Activated naive CD8-positive, alpha-beta T cell treated with anti-CD3 and anti-CD28 coated beads, Interleukin-2, amount 10 ng/mL, durations not matched to agents 7 days and 5 days (primary cell): ENCODE measurements at regions of chr15 and their contacts with region 1.

Region 1: GRCh38 chr15:90931737-90932659 is at the start of gene HDDC3:
- DNase-seq: peak; percentile 98
- ATAC-seq: peak; percentile 55
- H3K4me3 Mint-ChIP-seq: peak within 1 kb of the TSS; percentile 99
- H3K27ac Mint-ChIP-seq: peak within 1 kb of the TSS; percentile 99
- H3K4me1 Mint-ChIP-seq: peaks cover 45% of the 10 kb centered on the region
- H3K27me3 Mint-ChIP-seq: no peaks in the 10 kb centered on the region
- total RNA-seq, gene HDDC3: 28.1 to 29.2 TPM

Region 2: DNA sequence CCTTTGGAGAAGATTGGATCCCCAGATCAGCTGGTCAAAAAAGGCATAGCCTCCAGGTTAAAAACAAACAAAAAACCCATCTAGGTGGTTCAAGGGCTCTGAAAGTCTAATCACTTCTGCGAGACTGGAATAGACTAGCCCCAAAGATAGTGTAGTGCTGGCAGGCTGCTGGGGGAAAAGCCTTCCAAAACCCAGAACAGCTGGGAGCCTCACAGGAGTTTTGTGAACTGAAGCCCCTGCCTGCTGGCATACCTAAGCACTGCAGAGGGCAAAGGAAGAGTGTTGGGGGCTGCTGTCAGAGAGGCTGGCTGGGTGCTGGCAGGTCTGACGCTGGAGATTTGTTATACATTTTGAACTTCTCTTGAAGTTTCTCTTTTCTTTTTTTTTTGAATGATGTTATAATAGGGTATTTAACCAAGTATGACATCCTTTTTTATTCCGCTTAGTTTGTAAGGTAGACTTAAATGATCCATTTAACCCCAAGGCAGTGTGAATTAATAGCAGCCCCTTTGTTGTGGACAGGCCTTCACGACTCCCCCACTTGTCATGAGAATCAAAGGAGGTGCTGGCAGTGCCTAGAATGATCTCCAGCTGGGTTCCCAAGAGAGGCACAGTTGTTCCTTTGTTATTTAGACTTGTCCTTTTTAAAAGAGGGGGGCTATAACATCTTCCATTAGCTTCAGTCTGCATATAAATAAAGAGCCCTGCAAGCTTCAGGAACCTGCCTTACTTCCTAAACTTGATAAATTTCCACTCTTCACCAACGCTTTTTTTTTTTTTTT is 348.3 kb before region 1 on chr15:
- POLR2A ChIA-PET with region 1: no interaction called
- DNase-seq: no peak
- ATAC-seq: no peak
- H3K4me3 Mint-ChIP-seq: no peak overlapping the region
- H3K27ac Mint-ChIP-seq: peak overlapping the region; percentile 58
- H3K4me1 Mint-ChIP-seq: peaks cover 46% of the 10 kb centered on the region
- H3K27me3 Mint-ChIP-seq: no peaks in the 10 kb centered on the region

Region 3: GRCh38 chr15:90716976-90717821 is 214.8 kb before region 1 on chr15 and contains the start of gene BLM:
- POLR2A ChIA-PET with region 1: interaction called, 10 read pairs
- DNase-seq: peak; percentile 93
- ATAC-seq: peak; percentile 99
- H3K4me3 Mint-ChIP-seq: peak within 1 kb of the TSS; percentile 96
- H3K27ac Mint-ChIP-seq: peak within 1 kb of the TSS; percentile 92
- H3K4me1 Mint-ChIP-seq: peaks cover 22% of the 10 kb centered on the region
- H3K27me3 Mint-ChIP-seq: no peaks in the 10 kb centered on the region
- total RNA-seq, gene BLM: 36.6 to 41.0 TPM

Region 4: GRCh38 chr15:90902040-90902839 is 29.8 kb before region 1 on chr15:
- POLR2A ChIA-PET with region 1: interaction called, 141 read pairs
- DNase-seq: peak; percentile 84
- ATAC-seq: peak; percentile 78
- H3K4me3 Mint-ChIP-seq: peak overlapping the region; percentile 83
- H3K27ac Mint-ChIP-seq: peak overlapping the region; percentile 83
- H3K4me1 Mint-ChIP-seq: peaks cover 25% of the 10 kb centered on the region
- H3K27me3 Mint-ChIP-seq: no peaks in the 10 kb centered on the region

Region 5: DNA sequence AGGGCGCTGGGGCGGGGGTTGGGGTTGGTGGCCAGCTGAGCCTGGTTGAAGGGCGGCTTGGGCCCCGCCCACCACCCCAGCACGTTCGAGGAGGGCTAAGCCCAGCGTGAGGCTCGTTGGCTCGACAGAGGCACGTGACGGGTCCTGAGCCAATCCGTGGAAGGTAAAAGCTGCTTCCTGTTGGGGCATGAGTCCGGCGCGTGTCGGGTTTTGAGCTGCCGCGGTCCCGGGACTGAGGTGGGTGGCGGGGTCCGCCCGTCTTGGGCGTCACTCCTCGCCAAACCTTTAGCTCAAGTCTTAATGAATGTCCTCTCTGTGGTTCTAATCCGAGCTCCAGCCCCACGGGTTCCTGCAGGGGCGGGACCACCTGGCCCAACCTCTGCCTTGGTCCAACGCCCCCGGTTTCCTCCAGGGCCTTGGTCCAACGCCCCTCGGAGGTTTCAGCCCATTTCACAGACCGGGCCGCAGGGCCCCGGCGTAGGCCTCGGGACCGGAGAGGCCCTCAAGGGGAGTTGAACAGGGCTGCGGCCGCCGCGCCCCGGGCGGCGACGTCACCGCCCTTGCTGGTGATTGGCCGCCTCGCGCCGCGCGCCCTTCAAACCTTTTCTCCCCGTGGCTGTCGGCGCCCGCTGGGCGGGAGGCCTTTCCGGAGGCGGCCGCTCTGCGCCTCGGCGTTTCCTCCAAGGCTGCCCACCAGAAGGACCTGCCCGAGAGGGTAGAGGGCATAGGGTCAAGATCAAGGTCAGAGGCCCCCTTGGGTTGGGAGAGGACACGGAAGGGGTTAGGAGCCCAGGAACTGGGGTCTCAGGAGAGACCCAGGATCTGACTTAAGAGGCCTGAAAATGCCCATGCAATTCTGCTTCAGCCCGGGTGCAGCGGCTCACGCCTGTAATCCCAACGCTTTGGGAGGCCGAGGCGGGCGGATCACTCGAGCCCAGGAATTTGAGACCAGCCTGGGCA is 23.0 kb after region 1 on chr15 and contains the start of gene RCCD1:
- POLR2A ChIA-PET with region 1: interaction called, 55 read pairs
- DNase-seq: peak; percentile 88
- ATAC-seq: peak; percentile 94
- H3K4me3 Mint-ChIP-seq: peak within 1 kb of the TSS; percentile 86
- H3K27ac Mint-ChIP-seq: peak within 1 kb of the TSS; percentile 94
- H3K4me1 Mint-ChIP-seq: peaks cover 12% of the 10 kb centered on the region
- H3K27me3 Mint-ChIP-seq: no peaks in the 10 kb centered on the region
- total RNA-seq, gene RCCD1: 31.5 to 31.6 TPM

Region 6: DNA sequence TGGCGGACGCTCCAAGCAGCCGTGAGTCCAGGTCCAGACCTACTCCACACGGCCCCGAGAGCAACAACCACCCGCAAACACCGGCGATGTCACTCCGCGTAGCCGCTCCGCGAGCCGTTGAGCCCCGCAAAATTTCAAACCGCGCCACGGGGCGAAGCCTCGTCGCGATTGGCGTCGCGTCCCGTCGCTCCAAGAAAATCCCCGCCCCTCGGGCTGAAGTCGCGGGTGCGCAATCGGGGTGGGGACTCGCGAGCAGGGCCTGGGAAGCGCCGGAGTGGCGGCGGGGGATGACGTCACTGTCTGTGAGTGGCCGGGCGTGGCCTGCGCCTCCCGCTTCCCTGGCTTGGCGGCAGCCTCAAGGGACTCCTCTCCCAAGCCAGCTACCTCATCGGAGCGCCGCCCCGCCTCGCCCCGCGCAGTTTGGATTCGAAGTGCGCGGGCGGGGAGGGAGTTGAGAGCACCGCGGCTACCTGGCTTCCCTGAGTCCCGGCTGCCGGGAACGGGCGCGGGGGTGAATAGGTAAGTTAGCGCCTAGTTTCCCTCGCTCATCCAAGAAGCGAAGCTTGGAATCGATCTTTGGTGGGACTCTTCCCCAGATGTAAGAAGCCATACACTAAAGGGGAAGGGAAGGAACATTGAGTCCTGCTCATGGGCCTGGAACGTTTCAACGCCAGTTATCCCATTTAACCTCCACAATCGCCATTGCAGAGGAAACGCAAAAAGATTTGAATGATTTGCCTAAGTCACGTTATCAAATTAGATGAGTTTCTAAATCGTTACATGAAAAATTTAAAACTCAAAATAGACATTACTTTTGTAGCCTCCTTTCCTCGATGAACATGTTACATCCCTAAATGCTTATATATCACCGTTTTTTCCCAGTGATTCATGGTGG is 62.7 kb after region 1 on chr15 and contains the start of gene PRC1:
- POLR2A ChIA-PET with region 1: interaction called, 11 read pairs
- DNase-seq: peak; percentile 98
- ATAC-seq: peak; percentile 99
- H3K4me3 Mint-ChIP-seq: peak within 1 kb of the TSS; percentile 99
- H3K27ac Mint-ChIP-seq: peak within 1 kb of the TSS; percentile 100
- H3K4me1 Mint-ChIP-seq: peaks cover 31% of the 10 kb centered on the region
- H3K27me3 Mint-ChIP-seq: no peaks in the 10 kb centered on the region
- total RNA-seq, gene PRC1: 132 to 149 TPM

Region 7: DNA sequence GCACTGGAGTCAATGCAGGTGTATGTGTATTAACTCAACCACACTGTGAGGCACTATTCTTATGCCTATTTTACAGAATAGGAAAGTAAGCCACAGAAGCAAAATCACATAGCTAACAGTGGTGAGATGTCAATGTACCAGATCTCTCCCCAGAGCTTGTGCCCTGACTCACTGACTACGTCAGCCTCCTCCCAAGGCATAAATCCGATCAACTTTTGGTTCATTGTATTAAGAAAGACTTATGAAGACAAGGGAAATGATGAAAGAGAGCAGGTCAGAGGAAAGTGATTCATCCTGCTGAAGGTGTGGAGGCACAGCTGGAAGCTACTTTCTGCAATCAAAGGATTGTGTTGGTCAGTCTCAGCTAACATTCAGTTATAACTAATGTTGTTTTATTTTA is 135.0 kb after region 1 on chr15:
- POLR2A ChIA-PET with region 1: no interaction called
- DNase-seq: no peak
- ATAC-seq: no peak
- H3K4me3 Mint-ChIP-seq: no peak overlapping the region
- H3K27ac Mint-ChIP-seq: no peak overlapping the region
- H3K4me1 Mint-ChIP-seq: peaks cover 2% of the 10 kb centered on the region
- H3K27me3 Mint-ChIP-seq: peaks cover 20% of the 10 kb centered on the region